ENCODE measurements at regions of chr14 and their contacts with region 1.

Region 1: GRCh38 chr14:49934646-49935045 is 41.8 kb downstream of the ARF6 start:
- DNase-seq: no peak
- H3K4me3 ChIP-seq: no peak overlapping the region
- H3K27ac ChIP-seq: no peak overlapping the region
- H3K4me1 ChIP-seq: no peaks in the 10 kb centered on the region
- H3K27me3 ChIP-seq: no peaks in the 10 kb centered on the region
- CTCF ChIP-seq: no peak

Region 2: DNA sequence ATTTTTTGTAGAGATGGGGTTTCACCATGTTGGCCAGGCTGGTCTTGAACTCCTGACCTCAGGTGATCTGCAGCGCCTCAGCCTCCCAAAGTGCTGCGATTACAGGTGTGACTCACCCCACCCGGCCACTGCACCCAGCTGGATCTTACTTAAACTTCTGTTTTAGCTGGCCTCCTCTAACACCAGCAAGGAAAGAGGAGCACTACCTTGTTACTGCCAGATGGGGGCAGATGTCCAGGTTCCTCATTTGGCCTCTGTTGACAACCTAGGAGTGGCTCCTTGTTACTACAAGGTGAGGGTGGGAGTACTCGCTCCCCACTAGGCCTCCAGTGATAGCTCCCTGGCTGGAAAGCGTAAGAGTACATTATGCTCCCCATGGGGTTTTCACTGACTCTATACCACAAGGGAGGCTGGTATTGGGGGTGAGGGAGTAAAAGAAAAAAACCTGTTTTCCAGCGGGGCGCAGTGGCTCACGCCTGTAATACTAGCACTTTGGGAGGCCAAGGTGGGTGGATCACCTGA is 54.9 kb before region 1 on chr14:
- CTCF ChIA-PET with region 1: no interaction called
- dilution Hi-C with region 1: no loop called
- in situ Hi-C with region 1: no loop called
- intact Hi-C with region 1: no loop called
- DNase-seq: peak; percentile 63
- H3K4me3 ChIP-seq: no peak overlapping the region
- H3K27ac ChIP-seq: no peak overlapping the region
- H3K4me1 ChIP-seq: peaks cover 7% of the 10 kb centered on the region
- H3K27me3 ChIP-seq: no peaks in the 10 kb centered on the region
- CTCF ChIP-seq: peak; percentile 66 to 69

Region 3: GRCh38 chr14:49992901-49993335 is 58.3 kb after region 1 on chr14:
- CTCF ChIA-PET with region 1: no interaction called
- dilution Hi-C with region 1: loop called (anchors 5 kb)
- in situ Hi-C with region 1: no loop called
- intact Hi-C with region 1: no loop called
- DNase-seq: no peak
- H3K4me3 ChIP-seq: no peak overlapping the region
- H3K27ac ChIP-seq: no peak overlapping the region
- H3K4me1 ChIP-seq: no peaks in the 10 kb centered on the region
- H3K27me3 ChIP-seq: no peaks in the 10 kb centered on the region
- CTCF ChIP-seq: no peak

Measured in mammary epithelial cell (primary cell).